Activated T-helper 1 cell treated with anti-CD3 and anti-CD28 coated beads, Interleukin-12 subunit alpha, Interleukin-12 subunit beta, Interleukin-2, Interleukin-4 antibody, amounts not matched to agents 30 ng/mL and 10 ng/mL and 1 ng/mL, durations not matched to agents 14 hours and 24 hours and 36 hours (primary cell): ENCODE measurements at regions of chr2 and their contacts with region 1.

Region 1: DNA sequence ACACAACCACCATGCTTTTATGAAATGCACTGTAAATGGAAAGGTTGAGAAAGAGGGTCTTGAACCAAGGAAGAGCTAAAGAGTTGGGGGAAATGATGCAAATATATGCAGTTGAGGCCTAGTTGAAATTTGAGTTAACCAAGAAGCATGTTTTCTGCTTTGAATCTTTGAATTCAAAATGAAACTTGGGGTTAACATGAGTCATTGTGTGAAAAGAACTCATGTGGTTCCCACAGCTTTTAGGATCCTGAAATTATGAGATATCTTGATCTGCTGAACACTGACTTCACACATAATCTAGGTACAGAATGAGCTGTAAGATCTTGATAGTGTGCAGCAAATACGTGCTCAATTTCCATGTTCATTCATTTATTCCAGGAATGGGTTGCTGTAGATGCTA is 422.9 kb upstream of the TRIB2 start:
- DNase-seq: peak; percentile 27
- H3K4me3 Mint-ChIP-seq: peak overlapping the region; percentile 35
- H3K27ac Mint-ChIP-seq: peak overlapping the region; percentile 69
- H3K4me1 Mint-ChIP-seq: peaks cover 49% of the 10 kb centered on the region
- H3K27me3 Mint-ChIP-seq: peaks cover 3% of the 10 kb centered on the region

Region 2: DNA sequence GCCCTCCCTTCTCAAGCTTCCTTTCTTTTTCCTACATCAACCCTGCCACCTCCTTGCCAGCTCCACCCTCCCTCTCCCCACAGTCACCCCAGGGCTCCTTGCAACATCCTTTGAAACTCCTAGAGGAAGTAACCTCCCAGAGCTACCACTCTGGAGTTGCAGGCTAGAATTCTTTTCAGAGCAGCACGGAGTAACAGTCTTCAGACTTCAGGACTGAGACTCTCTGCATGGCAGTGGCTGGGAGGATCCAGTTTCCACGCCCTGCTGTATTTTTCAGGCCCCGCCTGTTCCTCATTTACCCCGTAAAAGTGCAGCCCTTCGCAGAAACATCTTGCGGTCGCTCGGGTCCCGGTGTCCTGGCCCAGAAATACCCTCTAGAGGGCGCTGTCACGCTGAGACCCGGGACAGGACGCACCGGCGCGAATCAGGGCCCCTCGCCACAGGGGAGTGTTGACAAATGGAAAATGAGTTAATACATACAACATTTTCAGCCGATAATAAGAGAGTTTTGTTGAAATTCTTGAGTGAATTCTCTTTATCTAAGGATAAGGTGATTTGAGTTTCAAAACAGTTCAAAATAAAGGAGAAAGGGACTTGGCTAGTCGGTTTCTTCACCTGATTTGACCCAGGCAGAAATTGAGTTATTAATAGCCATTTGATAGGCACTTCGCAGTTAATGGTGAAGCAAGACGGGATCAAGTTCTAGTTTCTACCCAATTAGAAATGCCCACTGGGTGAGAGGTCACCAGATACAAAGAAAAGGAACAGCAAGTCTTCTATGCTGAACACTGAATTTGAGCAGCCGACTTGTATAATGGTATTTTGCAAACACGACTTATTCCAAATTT is 605.4 kb before region 1 on chr2:
- intact Hi-C with region 1: loop called (anchors 5 kb)
- DNase-seq: peak; percentile 78
- H3K4me3 Mint-ChIP-seq: peak overlapping the region; percentile 37
- H3K27ac Mint-ChIP-seq: no peak overlapping the region
- H3K4me1 Mint-ChIP-seq: peaks cover 10% of the 10 kb centered on the region
- H3K27me3 Mint-ChIP-seq: peaks cover 26% of the 10 kb centered on the region

Region 3: GRCh38 chr2:11863513-11864328 is 430.2 kb before region 1 on chr2:
- intact Hi-C with region 1: loop called (anchors 10 kb)
- DNase-seq: peak; percentile 22
- H3K4me3 Mint-ChIP-seq: no peak overlapping the region
- H3K27ac Mint-ChIP-seq: no peak overlapping the region
- H3K4me1 Mint-ChIP-seq: peaks cover 9% of the 10 kb centered on the region
- H3K27me3 Mint-ChIP-seq: peaks cover 19% of the 10 kb centered on the region

Region 4: GRCh38 chr2:12176623-12177454 is 117.0 kb before region 1 on chr2:
- intact Hi-C with region 1: loop called (anchors 5 kb)
- DNase-seq: no peak
- H3K4me3 Mint-ChIP-seq: peak overlapping the region; percentile 12
- H3K27ac Mint-ChIP-seq: no peak overlapping the region
- H3K4me1 Mint-ChIP-seq: peaks cover 38% of the 10 kb centered on the region
- H3K27me3 Mint-ChIP-seq: peaks cover 2% of the 10 kb centered on the region

Region 5: DNA sequence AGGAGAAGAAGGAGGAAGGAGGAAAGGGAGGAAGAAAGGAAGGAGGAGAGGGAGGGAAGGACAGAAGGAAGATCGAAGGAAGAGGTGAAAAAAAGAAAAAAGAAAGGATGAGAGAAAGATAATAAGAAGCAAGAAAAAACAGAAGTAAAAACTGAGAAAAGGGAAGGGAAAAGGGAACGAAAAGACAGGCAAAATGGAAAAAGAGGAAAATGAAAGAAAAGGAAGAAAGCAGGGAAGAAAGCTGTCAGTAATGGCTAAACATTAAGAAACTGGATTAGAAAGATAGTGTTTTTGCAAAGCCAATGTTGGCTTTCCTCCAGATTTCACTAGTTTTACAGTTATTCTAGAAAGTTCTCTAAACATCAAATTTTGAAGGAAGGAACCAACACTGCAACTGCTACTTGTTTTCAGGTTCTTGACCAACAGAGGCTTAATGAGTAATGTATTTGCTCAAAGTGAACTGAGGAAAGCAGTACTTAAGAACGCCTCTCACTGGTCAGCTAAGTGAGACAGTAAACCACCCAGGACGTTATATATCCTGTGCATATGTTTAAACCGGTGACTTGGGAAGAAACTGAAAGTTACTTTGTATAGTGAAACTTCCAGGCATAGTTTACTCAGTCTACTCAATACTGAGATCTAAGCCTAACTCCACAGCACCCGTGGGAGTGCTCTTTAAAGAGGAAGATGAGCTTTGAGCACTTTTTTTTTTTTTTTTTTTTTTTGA is 136.7 kb after region 1 on chr2:
- intact Hi-C with region 1: loop called (anchors 1 kb)
- DNase-seq: peak; percentile 8
- H3K4me3 Mint-ChIP-seq: peak overlapping the region; percentile 58
- H3K27ac Mint-ChIP-seq: peak overlapping the region; percentile 74
- H3K4me1 Mint-ChIP-seq: peaks cover 55% of the 10 kb centered on the region
- H3K27me3 Mint-ChIP-seq: no peaks in the 10 kb centered on the region

Region 6: GRCh38 chr2:12507295-12507694 is 213.4 kb after region 1 on chr2:
- intact Hi-C with region 1: loop called (anchors 1 kb)
- DNase-seq: no peak
- H3K4me3 Mint-ChIP-seq: peak overlapping the region; percentile 13
- H3K27ac Mint-ChIP-seq: peak overlapping the region; percentile 24
- H3K4me1 Mint-ChIP-seq: peaks cover 63% of the 10 kb centered on the region
- H3K27me3 Mint-ChIP-seq: peaks cover 2% of the 10 kb centered on the region

Region 7: GRCh38 chr2:12702305-12703121 is 408.6 kb after region 1 on chr2:
- intact Hi-C with region 1: loop called (anchors 1 kb)
- DNase-seq: no peak
- H3K4me3 Mint-ChIP-seq: no peak overlapping the region
- H3K27ac Mint-ChIP-seq: peak overlapping the region; percentile 22
- H3K4me1 Mint-ChIP-seq: peaks cover 26% of the 10 kb centered on the region
- H3K27me3 Mint-ChIP-seq: peaks cover 16% of the 10 kb centered on the region